Heart left ventricle (tissue), 16 donors: ENCODE measurements at regions of chr5 and their contacts with region 1.

Region 1: GRCh38 chr5:112372539-112372938 is 46.5 kb downstream of the EPB41L4A start:
- DNase-seq: no peak
- ATAC-seq: peak in 1 of 4 donors; percentile 38
- H3K4me3 ChIP-seq: no peak overlapping the region
- H3K27ac ChIP-seq: no peak overlapping the region
- H3K4me1 ChIP-seq: peaks cover 0 to 63% (median 25%) of the 10 kb centered on the region in 12 donors
- H3K27me3 ChIP-seq: no peaks in the 10 kb centered on the region
- CTCF ChIP-seq: no peak
- POLR2A ChIP-seq: no peak

Region 2: DNA sequence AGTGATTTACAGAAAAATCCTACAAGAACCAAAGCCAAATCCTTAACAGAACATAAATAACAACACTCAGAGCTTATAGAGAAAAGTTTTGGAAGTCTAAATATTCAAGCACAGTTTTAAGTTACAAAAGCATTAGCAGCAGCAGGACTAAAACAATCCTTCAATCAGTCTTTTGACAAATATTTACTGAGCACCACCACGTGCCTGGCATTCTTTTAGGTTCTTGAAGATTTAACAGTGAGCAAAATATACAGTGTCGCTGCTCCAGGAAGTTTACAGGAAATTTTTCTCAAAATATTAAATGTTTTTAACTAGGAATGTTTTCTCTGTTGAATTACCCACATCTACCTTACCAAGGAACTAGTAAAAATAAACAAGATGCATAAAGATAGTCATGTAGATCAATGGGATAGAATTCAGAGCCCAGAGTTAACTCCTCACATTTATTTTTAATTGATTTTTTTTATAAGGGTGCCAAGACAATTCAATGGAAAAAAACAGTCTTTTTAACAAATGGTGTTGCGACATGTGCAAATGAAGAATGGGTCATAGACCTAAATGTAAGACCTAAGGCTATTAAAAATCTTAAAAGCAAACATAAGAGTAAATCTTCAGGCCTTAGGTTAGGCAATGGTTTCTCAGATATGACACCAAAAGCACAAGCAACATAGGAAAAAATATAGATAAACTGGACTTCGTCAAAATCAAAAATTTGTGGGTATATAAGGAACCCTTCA is 35.3 kb after region 1 on chr5:
- intact Hi-C with region 1: loop called in 1 of 10 experiments (anchors 5 kb)
- DNase-seq: no peak
- ATAC-seq: no peak
- H3K4me3 ChIP-seq: no peak overlapping the region
- H3K27ac ChIP-seq: peak overlapping the region in 2 of 12 donors; percentile 23 to 30
- H3K4me1 ChIP-seq: peaks cover 0 to 47% (median 36%) of the 10 kb centered on the region in 12 donors
- H3K27me3 ChIP-seq: no peaks in the 10 kb centered on the region
- CTCF ChIP-seq: no peak
- POLR2A ChIP-seq: no peak

Region 3: GRCh38 chr5:112419986-112420864 is 47.7 kb after region 1 on chr5:
- intact Hi-C with region 1: no loop called
- DNase-seq: peak; percentile 87 to 92 (median 88)
- ATAC-seq: peak; percentile 92 to 95 (median 92)
- H3K4me3 ChIP-seq: peak overlapping the region; percentile 63 to 97 (median 88)
- H3K27ac ChIP-seq: peak overlapping the region; percentile 72 to 95 (median 92)
- H3K4me1 ChIP-seq: peaks cover 0 to 31% (median 16%) of the 10 kb centered on the region in 12 donors
- H3K27me3 ChIP-seq: peaks cover 0 to 25% (median 0%) of the 10 kb centered on the region in 9 donors
- CTCF ChIP-seq: peak; percentile 81 to 98 (median 93)
- POLR2A ChIP-seq: no peak

Region 4: DNA sequence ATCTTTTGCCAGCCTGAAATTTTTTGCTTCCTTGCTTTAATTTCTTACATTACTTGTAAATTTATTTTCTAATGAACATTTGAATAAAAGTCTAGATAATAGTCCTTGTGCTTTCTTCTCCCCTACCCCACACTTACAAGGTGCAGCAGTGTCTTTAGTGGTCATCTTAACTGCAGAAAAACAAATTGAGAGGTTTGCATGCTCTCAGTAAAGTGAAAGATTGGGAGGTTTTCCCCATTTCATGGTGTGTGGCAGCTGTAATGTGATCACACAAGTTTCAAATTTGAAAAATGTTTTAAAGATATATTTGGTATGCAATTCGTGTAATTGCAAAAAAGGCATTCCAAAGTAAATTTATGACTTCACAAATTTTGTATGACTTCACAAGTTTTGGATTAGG is 379.8 kb after region 1 on chr5:
- intact Hi-C with region 1: no loop called
- DNase-seq: no peak
- ATAC-seq: no peak
- H3K4me3 ChIP-seq: no peak overlapping the region
- H3K27ac ChIP-seq: no peak overlapping the region
- H3K4me1 ChIP-seq: peaks cover 0 to 22% (median 3%) of the 10 kb centered on the region in 12 donors
- H3K27me3 ChIP-seq: no peaks in the 10 kb centered on the region
- CTCF ChIP-seq: no peak
- POLR2A ChIP-seq: no peak